Panc1 (cell line): ENCODE measurements at regions of chr15 and their contacts with region 1.

Region 1: GRCh38 chr15:64731012-64731806 is 44.2 kb downstream of the RBPMS2 start:
- DNase-seq: peak; percentile 54
- ATAC-seq: peak; percentile 91
- H3K4me3 ChIP-seq: no peak overlapping the region
- H3K27ac ChIP-seq: no peak overlapping the region
- H3K4me1 ChIP-seq: peaks cover 3% of the 10 kb centered on the region; the same call in 1 of the 2 replicates
- H3K27me3 ChIP-seq: no peaks in the 10 kb centered on the region
- CTCF ChIP-seq: peak; percentile 95

Region 2: DNA sequence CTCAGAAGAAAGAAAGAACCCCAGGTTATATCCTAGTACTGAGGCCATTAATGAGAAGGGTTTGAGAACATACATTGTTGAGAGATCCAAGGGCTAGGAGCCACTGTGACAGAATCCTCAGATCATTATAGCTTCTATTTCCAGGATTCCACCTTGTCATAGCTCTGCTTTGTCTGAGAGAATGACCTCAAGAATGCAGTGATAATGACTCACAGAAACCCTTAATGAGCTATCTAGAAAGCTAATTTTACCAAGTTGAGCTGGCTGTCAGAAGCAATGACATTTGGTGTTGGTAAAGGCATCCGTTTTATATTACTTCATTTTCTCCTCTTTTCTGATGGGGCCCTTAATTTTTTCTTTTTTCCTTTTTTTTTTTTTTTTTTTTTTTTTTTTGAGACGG is 332.6 kb before region 1 on chr15:
- CTCF ChIA-PET with region 1: no interaction called
- POLR2A ChIA-PET with region 1: no interaction called
- in situ Hi-C with region 1: no loop called
- intact Hi-C with region 1: no loop called
- DNase-seq: no peak
- ATAC-seq: no peak
- H3K4me3 ChIP-seq: no peak overlapping the region
- H3K27ac ChIP-seq: no peak overlapping the region
- H3K4me1 ChIP-seq: no peaks in the 10 kb centered on the region
- H3K27me3 ChIP-seq: no peaks in the 10 kb centered on the region
- CTCF ChIP-seq: no peak

Region 3: DNA sequence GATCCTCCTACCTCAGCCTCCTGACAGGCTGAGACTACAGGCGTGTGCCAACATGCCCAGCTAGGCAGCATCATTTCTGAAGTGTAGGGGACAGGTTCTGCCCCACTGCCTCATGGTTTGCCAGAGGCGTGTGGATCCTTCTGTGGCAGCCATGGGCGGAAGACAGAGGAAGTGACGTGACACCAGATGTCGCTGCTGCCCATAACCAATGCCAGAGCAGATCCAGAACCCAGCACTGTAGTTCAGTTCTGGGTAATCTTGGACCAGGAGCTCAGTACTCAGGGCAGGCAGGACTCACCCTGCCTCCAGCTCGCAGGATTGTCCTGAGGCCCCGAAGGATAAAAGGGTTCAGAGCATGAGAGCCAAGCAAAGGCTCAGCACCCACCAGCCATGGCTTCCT is 36.0 kb after region 1 on chr15:
- CTCF ChIA-PET with region 1: no interaction called
- POLR2A ChIA-PET with region 1: interaction called, 11 read pairs
- in situ Hi-C with region 1: no loop called
- intact Hi-C with region 1: no loop called
- DNase-seq: no peak
- ATAC-seq: peak; percentile 51; the same call in 1 of the 2 replicates
- H3K4me3 ChIP-seq: no peak overlapping the region
- H3K27ac ChIP-seq: no peak overlapping the region
- H3K4me1 ChIP-seq: no peaks in the 10 kb centered on the region; the same call in 1 of the 2 replicates
- H3K27me3 ChIP-seq: no peaks in the 10 kb centered on the region
- CTCF ChIP-seq: no peak

Region 4: DNA sequence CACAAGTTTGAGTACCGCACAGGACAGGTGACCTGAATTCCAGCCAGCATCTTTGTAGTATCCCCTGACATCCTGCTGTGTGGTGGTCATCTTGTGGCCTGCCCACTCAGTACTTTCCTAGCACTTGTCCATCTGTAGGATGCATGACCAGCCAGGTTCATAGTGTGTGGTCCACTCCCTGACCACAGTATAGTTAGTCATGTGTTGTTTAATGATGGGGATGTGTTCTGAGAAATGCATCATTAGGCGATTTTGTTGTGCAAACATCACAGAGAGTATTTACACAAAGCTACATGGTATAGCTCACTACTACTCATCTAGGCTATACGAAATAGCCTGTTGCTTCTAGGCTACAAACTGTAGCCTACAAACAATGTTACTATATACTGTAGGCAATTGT is 61.1 kb after region 1 on chr15:
- CTCF ChIA-PET with region 1: no interaction called
- POLR2A ChIA-PET with region 1: no interaction called
- in situ Hi-C with region 1: no loop called
- intact Hi-C with region 1: no loop called
- DNase-seq: peak; percentile 18
- ATAC-seq: peak; percentile 57
- H3K4me3 ChIP-seq: no peak overlapping the region
- H3K27ac ChIP-seq: no peak overlapping the region
- H3K4me1 ChIP-seq: no peaks in the 10 kb centered on the region
- H3K27me3 ChIP-seq: no peaks in the 10 kb centered on the region
- CTCF ChIP-seq: no peak

Region 5: GRCh38 chr15:64865998-64866520 is 134.8 kb after region 1 on chr15:
- CTCF ChIA-PET with region 1: no interaction called
- POLR2A ChIA-PET with region 1: no interaction called
- in situ Hi-C with region 1: no loop called
- intact Hi-C with region 1: no loop called
- DNase-seq: no peak
- ATAC-seq: peak; percentile 33; the same call in 1 of the 2 replicates
- H3K4me3 ChIP-seq: no peak overlapping the region
- H3K27ac ChIP-seq: no peak overlapping the region
- H3K4me1 ChIP-seq: no peaks in the 10 kb centered on the region; the same call in 1 of the 2 replicates
- H3K27me3 ChIP-seq: no peaks in the 10 kb centered on the region
- CTCF ChIP-seq: no peak